Activated naive CD4-positive, alpha-beta T cell treated with anti-CD3 and anti-CD28 coated beads for 36 hours (primary cell): ENCODE measurements at regions of chr14 and their contacts with region 1.

Region 1: GRCh38 chr14:61662437-61663311 is 32.6 kb upstream of the HIF1A start:
- DNase-seq: peak; percentile 79
- H3K4me3 Mint-ChIP-seq: peak overlapping the region; percentile 63
- H3K27ac Mint-ChIP-seq: peak overlapping the region; percentile 98
- H3K4me1 Mint-ChIP-seq: peaks cover 69% of the 10 kb centered on the region
- H3K27me3 Mint-ChIP-seq: no peaks in the 10 kb centered on the region

Region 2: DNA sequence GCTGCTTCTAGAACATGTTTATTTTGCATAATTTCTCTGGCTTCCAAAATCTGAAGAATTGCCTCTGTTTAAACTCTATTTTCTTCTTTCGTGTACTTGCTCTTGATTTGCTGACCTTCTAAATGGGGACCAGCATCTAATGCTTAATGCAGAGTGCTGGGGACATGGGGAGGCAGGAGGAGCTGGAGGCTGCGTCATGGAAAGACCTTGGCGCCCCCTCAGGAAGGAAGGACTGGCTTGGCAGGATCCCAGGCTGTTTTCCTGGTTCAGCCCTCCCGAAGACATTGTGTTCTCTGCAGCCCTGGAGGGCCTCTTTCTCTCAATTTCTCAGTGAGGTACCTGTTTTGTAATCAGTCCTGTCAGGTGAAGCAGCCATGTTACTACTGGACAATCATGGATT is 335.8 kb before region 1 on chr14:
- CTCF ChIA-PET with region 1: no interaction called
- intact Hi-C with region 1: loop called (anchors 1 kb)
- DNase-seq: no peak
- H3K4me3 Mint-ChIP-seq: peak overlapping the region; percentile 63
- H3K27ac Mint-ChIP-seq: peak overlapping the region; percentile 95
- H3K4me1 Mint-ChIP-seq: peaks cover 70% of the 10 kb centered on the region
- H3K27me3 Mint-ChIP-seq: no peaks in the 10 kb centered on the region

Region 3: GRCh38 chr14:61512026-61512834 is 150.4 kb before region 1 on chr14:
- CTCF ChIA-PET with region 1: no interaction called
- intact Hi-C with region 1: loop called (anchors 1 kb)
- DNase-seq: peak; percentile 46
- H3K4me3 Mint-ChIP-seq: peak overlapping the region; percentile 56
- H3K27ac Mint-ChIP-seq: peak overlapping the region; percentile 100
- H3K4me1 Mint-ChIP-seq: peaks cover 95% of the 10 kb centered on the region
- H3K27me3 Mint-ChIP-seq: no peaks in the 10 kb centered on the region

Region 4: GRCh38 chr14:61561657-61562276 is 100.9 kb before region 1 on chr14:
- CTCF ChIA-PET with region 1: no interaction called
- intact Hi-C with region 1: loop called (anchors 1 kb)
- DNase-seq: no peak
- H3K4me3 Mint-ChIP-seq: no peak overlapping the region
- H3K27ac Mint-ChIP-seq: peak overlapping the region; percentile 75
- H3K4me1 Mint-ChIP-seq: peaks cover 73% of the 10 kb centered on the region
- H3K27me3 Mint-ChIP-seq: no peaks in the 10 kb centered on the region

Region 5: DNA sequence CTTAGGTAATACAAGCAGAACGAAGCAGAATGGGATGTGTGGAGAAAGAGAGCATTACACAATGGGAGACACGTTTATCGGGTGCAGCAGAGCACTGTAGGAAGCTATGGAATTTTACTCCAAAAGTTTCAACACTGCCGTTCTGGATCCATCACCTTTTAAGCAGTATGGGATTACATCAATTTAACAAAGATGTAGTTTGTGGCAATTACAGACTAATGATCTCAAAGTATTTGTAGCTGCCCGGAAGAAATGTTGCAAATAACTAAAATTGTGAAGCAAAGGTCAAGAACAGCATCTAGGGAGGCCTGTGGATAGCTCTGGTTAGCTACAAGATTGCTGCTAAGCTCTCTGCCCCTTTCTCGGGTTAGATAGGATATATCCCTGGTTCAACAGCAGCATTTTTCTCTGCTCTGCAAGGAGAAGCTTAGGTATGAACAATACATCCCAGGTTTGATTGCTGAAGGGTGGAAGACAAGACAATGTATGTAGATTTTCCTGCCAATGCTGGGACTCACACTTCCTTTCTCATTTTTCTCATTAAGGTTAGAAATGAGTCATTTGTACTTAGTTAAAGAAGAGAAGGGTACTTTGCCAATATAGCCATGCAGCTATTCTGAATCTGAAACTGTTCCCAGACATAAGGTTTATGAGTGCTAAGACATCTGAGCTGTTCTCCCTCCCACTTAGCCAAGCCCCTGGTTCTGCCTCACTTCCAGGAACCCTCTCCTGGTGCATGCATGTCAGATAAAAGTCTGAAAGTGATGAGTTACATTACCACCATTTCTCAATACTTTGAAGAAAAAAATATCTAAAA is 42.3 kb before region 1 on chr14:
- CTCF ChIA-PET with region 1: interaction called, 5 read pairs
- intact Hi-C with region 1: loop called (anchors 1 kb)
- DNase-seq: peak; percentile 85
- H3K4me3 Mint-ChIP-seq: no peak overlapping the region
- H3K27ac Mint-ChIP-seq: peak overlapping the region; percentile 89
- H3K4me1 Mint-ChIP-seq: peaks cover 80% of the 10 kb centered on the region
- H3K27me3 Mint-ChIP-seq: no peaks in the 10 kb centered on the region

Region 6: GRCh38 chr14:61703342-61704129 is 40.9 kb after region 1 on chr14:
- CTCF ChIA-PET with region 1: no interaction called
- intact Hi-C with region 1: loop called (anchors 1 kb)
- DNase-seq: no peak
- H3K4me3 Mint-ChIP-seq: peak overlapping the region; percentile 62
- H3K27ac Mint-ChIP-seq: peak overlapping the region; percentile 84
- H3K4me1 Mint-ChIP-seq: peaks cover 74% of the 10 kb centered on the region
- H3K27me3 Mint-ChIP-seq: no peaks in the 10 kb centered on the region